Activated naive CD4-positive, alpha-beta T cell treated with anti-CD3 and anti-CD28 coated beads for 36 hours (primary cell): ENCODE measurements at regions of chr2 and their contacts with region 1.

Region 1: GRCh38 chr2:128736689-128737545 is 418.2 kb upstream of the HS6ST1 start:
- DNase-seq: peak; percentile 70
- H3K4me3 Mint-ChIP-seq: no peak overlapping the region
- H3K27ac Mint-ChIP-seq: no peak overlapping the region
- H3K4me1 Mint-ChIP-seq: peaks cover 5% of the 10 kb centered on the region
- H3K27me3 Mint-ChIP-seq: peaks cover 20% of the 10 kb centered on the region

Region 2: DNA sequence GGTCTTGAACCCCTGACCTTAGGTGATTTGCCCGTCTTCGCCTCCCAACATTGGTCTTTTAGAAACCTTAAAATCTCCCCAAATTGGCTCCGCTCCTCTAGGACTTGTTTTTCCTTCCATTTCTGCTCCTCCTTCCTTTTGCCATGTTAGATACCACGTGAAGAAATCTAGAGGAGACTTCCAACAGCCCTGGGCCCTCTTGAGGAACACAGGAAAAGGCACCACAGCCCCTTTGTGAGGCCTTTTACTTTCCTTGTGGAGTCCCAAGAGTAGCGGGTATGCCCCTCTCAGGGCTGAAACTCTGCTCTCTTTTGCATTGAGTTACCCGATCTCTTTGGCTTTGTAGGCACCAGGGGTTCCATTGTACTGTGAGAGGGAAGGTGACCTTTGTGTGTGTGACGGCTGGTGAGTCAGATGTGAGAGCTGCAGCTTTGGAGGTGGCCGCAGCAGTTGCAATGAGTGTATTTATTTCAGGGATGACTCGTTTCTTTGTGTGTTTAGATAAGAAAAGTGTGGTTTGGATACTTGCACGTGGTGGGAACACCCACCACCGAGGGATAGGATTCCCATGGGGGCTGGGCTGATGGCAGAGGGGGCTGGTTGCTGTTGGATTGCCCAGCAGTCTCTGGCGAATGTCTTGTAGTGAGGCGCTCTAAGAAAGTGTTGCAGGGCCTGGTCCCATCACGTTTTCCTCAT is 199.8 kb before region 1 on chr2:
- CTCF ChIA-PET with region 1: no interaction called
- intact Hi-C with region 1: loop called (anchors 10 kb)
- DNase-seq: peak; percentile 21
- H3K4me3 Mint-ChIP-seq: no peak overlapping the region
- H3K27ac Mint-ChIP-seq: no peak overlapping the region
- H3K4me1 Mint-ChIP-seq: no peaks in the 10 kb centered on the region
- H3K27me3 Mint-ChIP-seq: peaks cover 8% of the 10 kb centered on the region

Region 3: DNA sequence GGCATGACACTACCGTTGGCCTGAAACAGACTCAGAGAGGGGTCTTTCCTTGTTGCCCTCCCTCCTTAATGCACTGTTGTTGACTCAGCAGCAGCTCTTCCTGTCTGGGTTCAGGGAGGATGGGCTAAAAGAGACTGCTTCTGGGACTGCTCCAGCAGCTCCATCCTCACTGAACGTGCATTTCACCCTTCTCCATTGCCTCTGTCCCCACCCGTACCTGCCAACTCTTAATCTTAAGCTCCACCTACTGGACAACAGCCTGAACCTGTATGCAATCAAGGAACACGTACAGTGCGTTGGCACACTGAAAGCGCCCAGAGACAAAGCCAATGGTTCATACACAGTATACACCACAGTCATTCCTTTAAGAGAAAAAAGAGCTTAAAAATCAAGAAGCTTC is 1011.7 kb after region 1 on chr2:
- CTCF ChIA-PET with region 1: no interaction called
- intact Hi-C with region 1: loop called (anchors 10 kb)
- DNase-seq: no peak
- H3K4me3 Mint-ChIP-seq: no peak overlapping the region
- H3K27ac Mint-ChIP-seq: no peak overlapping the region
- H3K4me1 Mint-ChIP-seq: no peaks in the 10 kb centered on the region
- H3K27me3 Mint-ChIP-seq: peaks cover 11% of the 10 kb centered on the region

Region 4: GRCh38 chr2:129849559-129850160 is 1112.7 kb after region 1 on chr2:
- CTCF ChIA-PET with region 1: no interaction called
- intact Hi-C with region 1: loop called (anchors 1 kb)
- DNase-seq: no peak
- H3K4me3 Mint-ChIP-seq: no peak overlapping the region
- H3K27ac Mint-ChIP-seq: no peak overlapping the region
- H3K4me1 Mint-ChIP-seq: no peaks in the 10 kb centered on the region
- H3K27me3 Mint-ChIP-seq: peaks cover 20% of the 10 kb centered on the region

Region 5: GRCh38 chr2:129923265-129924091 is 1186.6 kb after region 1 on chr2:
- CTCF ChIA-PET with region 1: no interaction called
- intact Hi-C with region 1: loop called (anchors 5 kb)
- DNase-seq: peak; percentile 25
- H3K4me3 Mint-ChIP-seq: no peak overlapping the region
- H3K27ac Mint-ChIP-seq: no peak overlapping the region
- H3K4me1 Mint-ChIP-seq: peaks cover 3% of the 10 kb centered on the region
- H3K27me3 Mint-ChIP-seq: peaks cover 18% of the 10 kb centered on the region